ENCODE measurements at regions of chr4 and their contacts with region 1.

Region 1: DNA sequence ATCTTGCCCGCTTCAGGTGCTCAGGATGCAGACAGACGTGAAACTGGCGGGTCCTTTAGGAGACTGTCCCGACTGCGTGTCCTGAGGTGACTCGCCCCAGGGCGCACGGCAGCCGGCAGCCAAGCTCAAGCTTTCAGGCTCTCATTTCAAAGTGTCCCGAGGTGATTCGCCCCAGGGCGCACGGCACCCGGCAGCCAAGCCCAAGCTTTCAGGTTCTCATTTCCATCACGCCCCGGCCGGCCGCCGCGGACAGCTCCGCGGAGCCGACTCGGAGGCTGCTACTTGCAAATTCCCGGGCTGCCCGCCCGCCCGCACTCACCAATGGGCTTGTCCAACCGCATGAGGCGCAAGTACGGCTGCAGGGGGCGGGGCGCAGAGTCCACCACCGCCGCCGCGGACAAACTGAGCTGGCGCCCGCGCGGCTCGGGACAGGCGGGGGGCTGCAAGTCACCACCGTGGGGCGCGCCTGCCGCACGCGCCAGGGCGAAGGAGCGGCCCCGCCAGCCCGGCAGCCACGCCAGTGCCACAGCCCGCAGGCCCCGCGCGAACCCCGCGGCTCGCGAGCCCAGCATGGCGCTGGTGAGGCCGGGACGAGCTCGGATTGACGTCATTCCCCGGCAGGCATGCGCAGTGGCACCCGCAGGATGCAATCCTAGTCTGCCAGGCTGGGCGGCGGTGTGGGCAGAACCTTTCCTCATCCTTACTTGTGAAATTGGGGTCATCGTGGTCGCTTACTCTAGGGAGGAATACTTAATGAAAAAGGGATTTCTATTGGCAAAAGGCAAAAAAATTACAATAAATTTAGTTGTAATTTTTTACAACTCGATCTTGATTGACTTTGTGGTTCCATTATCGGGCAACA is at the start of gene COQ2:
- DNase-seq: no peak
- ATAC-seq: peak; percentile 80
- H3K4me3 ChIP-seq: peak within 1 kb of the TSS; percentile 69
- H3K27ac ChIP-seq: peak within 1 kb of the TSS; percentile 63
- H3K4me1 ChIP-seq: peaks cover 6% of the 10 kb centered on the region
- H3K27me3 ChIP-seq: no peaks in the 10 kb centered on the region
- CTCF ChIP-seq: peak in 2 of 3 experiments; percentile 10 to 16; a peak in 1 of 6 replicates
- EP300 ChIP-seq: no peak
- POLR2A ChIP-seq: peak; percentile 84
- RAD21 ChIP-seq: no peak
- polyA plus RNA-seq, gene COQ2: 5.0 to 11.2 TPM

Region 2: GRCh38 chr4:82851885-82852750 is 432.3 kb before region 1 on chr4:
- CTCF ChIA-PET with region 1: interaction called, 30 read pairs
- POLR2A ChIA-PET with region 1: interaction called, 4 read pairs
- RAD21 ChIA-PET with region 1: interaction called, 5 read pairs
- SMC1A ChIA-PET with region 1: interaction called, 3 read pairs
- in situ Hi-C with region 1: no loop called
- intact Hi-C with region 1: no loop called
- DNase-seq: no peak
- ATAC-seq: peak; percentile 77
- H3K4me3 ChIP-seq: no peak overlapping the region
- H3K27ac ChIP-seq: no peak overlapping the region
- H3K4me1 ChIP-seq: no peaks in the 10 kb centered on the region
- H3K27me3 ChIP-seq: no peaks in the 10 kb centered on the region
- CTCF ChIP-seq: peak; percentile 42 to 50 (median 45); a peak in 3 of 6 replicates
- EP300 ChIP-seq: no peak
- POLR2A ChIP-seq: no peak
- RAD21 ChIP-seq: peak; percentile 63

Region 3: DNA sequence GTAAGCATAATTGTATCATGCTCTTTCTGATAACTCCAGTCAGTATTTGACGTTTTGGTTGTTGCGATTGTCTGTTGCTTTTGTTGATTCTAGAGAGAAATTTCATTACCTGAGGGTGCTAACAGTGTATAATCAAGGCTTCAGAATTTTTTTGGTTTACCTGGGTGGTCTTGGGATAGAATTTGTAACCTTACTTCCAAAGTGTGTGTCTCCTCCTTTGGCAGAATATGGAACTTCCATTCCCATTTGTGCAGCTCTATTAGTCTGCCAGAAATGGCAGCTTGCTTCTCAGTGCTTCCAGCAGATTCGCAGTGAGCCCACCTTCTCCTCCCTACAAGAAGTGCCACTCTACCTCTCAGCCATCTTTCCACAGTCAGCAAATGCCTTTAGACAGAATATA is 244.2 kb before region 1 on chr4:
- CTCF ChIA-PET with region 1: interaction called, 22 read pairs
- POLR2A ChIA-PET with region 1: interaction called, 3 read pairs
- RAD21 ChIA-PET with region 1: interaction called, 14 read pairs
- SMC1A ChIA-PET with region 1: interaction called, 18 read pairs
- in situ Hi-C with region 1: no loop called
- intact Hi-C with region 1: no loop called
- DNase-seq: no peak
- ATAC-seq: no peak
- H3K4me3 ChIP-seq: no peak overlapping the region
- H3K27ac ChIP-seq: no peak overlapping the region
- H3K4me1 ChIP-seq: peaks cover 6% of the 10 kb centered on the region
- H3K27me3 ChIP-seq: no peaks in the 10 kb centered on the region
- CTCF ChIP-seq: no peak
- EP300 ChIP-seq: no peak
- POLR2A ChIP-seq: no peak
- RAD21 ChIP-seq: no peak

Region 4: GRCh38 chr4:83082777-83083176 is 201.6 kb before region 1 on chr4:
- CTCF ChIA-PET with region 1: interaction called, 147 read pairs
- POLR2A ChIA-PET with region 1: no interaction called
- RAD21 ChIA-PET with region 1: interaction called, 6 read pairs
- SMC1A ChIA-PET with region 1: interaction called, 10 read pairs
- in situ Hi-C with region 1: no loop called
- intact Hi-C with region 1: no loop called
- DNase-seq: no peak
- ATAC-seq: peak; percentile 66
- H3K4me3 ChIP-seq: no peak overlapping the region
- H3K27ac ChIP-seq: no peak overlapping the region
- H3K4me1 ChIP-seq: no peaks in the 10 kb centered on the region
- H3K27me3 ChIP-seq: no peaks in the 10 kb centered on the region
- CTCF ChIP-seq: no peak
- EP300 ChIP-seq: no peak
- POLR2A ChIP-seq: no peak
- RAD21 ChIP-seq: no peak

Region 5: DNA sequence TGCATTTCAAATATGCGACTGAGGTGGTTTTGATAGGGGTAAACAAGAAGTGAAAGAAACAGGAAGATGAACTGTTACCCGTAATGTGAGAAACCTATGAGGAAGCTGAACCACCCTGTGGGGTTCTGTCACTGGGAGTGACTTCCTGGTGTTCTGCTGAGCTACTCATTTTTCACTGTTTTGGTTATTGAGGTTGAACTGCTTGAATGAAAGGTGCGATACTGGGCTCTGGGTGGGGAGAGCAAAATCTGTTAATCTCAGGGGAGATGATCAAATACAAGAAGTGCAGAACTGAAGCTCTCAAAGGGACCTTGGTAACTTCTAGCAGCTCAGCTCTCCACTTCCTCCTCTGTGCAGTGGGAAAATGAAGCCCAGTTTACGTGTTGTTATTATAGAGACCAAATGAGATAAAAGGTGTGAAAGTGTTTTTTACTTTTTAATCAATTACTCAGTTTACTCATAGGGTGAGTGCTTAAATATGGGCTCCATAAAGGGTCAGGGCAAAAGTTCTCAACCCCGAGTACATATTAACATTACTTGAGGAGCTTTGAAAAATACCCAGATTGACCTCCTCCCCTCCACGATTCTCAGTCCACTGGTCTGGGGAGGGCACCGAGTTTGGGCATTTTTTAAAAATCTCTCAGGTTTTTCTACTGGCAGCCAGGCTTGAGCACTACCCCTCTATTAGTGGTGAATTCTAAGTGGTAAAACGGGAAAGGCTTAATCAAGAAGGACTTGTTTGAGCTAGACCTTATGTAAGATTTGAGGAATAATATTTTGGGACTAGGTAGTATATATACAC is 66.5 kb before region 1 on chr4:
- CTCF ChIA-PET with region 1: interaction called, 25 read pairs
- POLR2A ChIA-PET with region 1: interaction called, 7 read pairs
- RAD21 ChIA-PET with region 1: interaction called, 24 read pairs
- SMC1A ChIA-PET with region 1: interaction called, 27 read pairs
- in situ Hi-C with region 1: no loop called
- intact Hi-C with region 1: loop called (anchors 2 kb)
- DNase-seq: peak; percentile 99
- ATAC-seq: peak; percentile 79
- H3K4me3 ChIP-seq: peak overlapping the region; percentile 17; the same call in 1 of the 2 replicates
- H3K27ac ChIP-seq: peak overlapping the region; percentile 97
- H3K4me1 ChIP-seq: peaks cover 70% of the 10 kb centered on the region
- H3K27me3 ChIP-seq: no peaks in the 10 kb centered on the region
- CTCF ChIP-seq: no peak
- EP300 ChIP-seq: peak; percentile 78 to 88; a peak in 2 of 4 replicates
- POLR2A ChIP-seq: peak; percentile 31; the same call in 1 of the 2 replicates
- RAD21 ChIP-seq: peak; percentile 20; the same call in 1 of the 2 replicates

Region 6: GRCh38 chr4:83297548-83298260 is 13.3 kb after region 1 on chr4:
- CTCF ChIA-PET with region 1: interaction called, 10 read pairs
- POLR2A ChIA-PET with region 1: interaction called, 3 read pairs
- RAD21 ChIA-PET with region 1: no interaction called
- SMC1A ChIA-PET with region 1: interaction called, 6 read pairs
- in situ Hi-C with region 1: no loop called
- intact Hi-C with region 1: no loop called
- DNase-seq: no peak
- ATAC-seq: peak; percentile 39; the same call in 2 of the 3 replicates
- H3K4me3 ChIP-seq: no peak overlapping the region
- H3K27ac ChIP-seq: no peak overlapping the region
- H3K4me1 ChIP-seq: peaks cover 6% of the 10 kb centered on the region
- H3K27me3 ChIP-seq: no peaks in the 10 kb centered on the region
- CTCF ChIP-seq: no peak
- EP300 ChIP-seq: no peak
- POLR2A ChIP-seq: no peak
- RAD21 ChIP-seq: no peak

Region 7: DNA sequence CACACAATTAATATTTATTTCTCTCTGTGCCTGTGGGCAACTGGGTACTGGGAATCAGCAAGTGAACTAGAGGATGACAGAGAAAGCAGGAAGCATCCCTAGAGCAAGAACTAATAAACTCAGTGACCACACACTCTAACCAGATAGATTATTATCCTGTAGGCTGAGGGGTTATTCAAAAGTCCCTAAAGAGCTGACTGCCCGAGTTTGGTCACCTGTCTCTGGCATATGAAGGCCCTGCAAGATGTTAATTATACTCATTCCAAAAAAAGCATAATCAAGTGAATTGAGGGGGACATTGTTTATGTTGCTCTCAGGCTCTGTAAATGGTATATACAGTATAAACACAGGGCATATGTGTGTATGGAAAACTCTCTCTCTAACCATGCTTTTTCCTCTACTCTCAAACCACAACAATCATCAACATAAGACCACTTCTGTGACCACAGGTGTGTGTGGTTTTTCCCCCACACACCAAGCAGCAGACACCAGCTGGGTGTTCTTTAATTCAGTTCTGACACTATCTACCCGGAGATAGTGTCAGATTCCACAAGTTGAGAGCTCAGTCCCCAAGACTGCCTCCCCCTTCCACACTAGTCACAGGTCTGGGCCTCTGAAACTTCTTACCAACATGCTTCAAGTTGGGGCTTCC is 56.4 kb after region 1 on chr4:
- CTCF ChIA-PET with region 1: no interaction called
- POLR2A ChIA-PET with region 1: no interaction called
- RAD21 ChIA-PET with region 1: no interaction called
- SMC1A ChIA-PET with region 1: no interaction called
- in situ Hi-C with region 1: no loop called
- intact Hi-C with region 1: no loop called
- DNase-seq: no peak
- ATAC-seq: peak; percentile 56
- H3K4me3 ChIP-seq: no peak overlapping the region
- H3K27ac ChIP-seq: no peak overlapping the region
- H3K4me1 ChIP-seq: peaks cover 4% of the 10 kb centered on the region; the same call in 1 of the 2 replicates
- H3K27me3 ChIP-seq: no peaks in the 10 kb centered on the region
- CTCF ChIP-seq: no peak
- EP300 ChIP-seq: no peak
- POLR2A ChIP-seq: no peak
- RAD21 ChIP-seq: no peak

Measured in GM12878 (cell line).